ENCODE measurements at regions of chr2 and their contacts with region 1.

Region 1: DNA sequence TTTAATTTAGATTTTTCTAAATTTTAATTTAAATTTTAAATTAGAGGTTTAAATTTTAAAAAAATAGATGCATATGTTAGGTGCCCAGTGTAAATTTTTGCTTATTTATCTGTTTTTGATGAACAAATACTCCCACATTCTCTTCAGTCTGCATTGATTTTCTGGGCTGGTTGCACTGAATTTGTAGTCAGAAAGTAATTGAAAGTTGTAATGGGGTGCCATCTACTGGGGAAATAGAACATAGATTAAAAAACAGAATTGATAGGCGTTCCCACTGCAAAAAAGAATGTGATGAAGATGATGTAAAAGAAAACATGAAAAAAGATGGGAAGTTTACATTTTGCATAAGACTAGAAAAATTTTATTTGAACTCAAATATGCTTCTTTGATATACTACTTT is 51.7 kb upstream of the CCDC85A start:
- DNase-seq: no peak
- ATAC-seq: peak; percentile 61 to 76 (median 72)
- H3K4me3 ChIP-seq: no peak overlapping the region
- H3K27ac ChIP-seq: no peak overlapping the region
- H3K4me1 ChIP-seq: no peaks in the 10 kb centered on the region
- H3K27me3 ChIP-seq: no peaks in the 10 kb centered on the region
- CTCF ChIP-seq: peak in 3 of 4 donors; percentile 34 to 44 (median 39)

Region 2: DNA sequence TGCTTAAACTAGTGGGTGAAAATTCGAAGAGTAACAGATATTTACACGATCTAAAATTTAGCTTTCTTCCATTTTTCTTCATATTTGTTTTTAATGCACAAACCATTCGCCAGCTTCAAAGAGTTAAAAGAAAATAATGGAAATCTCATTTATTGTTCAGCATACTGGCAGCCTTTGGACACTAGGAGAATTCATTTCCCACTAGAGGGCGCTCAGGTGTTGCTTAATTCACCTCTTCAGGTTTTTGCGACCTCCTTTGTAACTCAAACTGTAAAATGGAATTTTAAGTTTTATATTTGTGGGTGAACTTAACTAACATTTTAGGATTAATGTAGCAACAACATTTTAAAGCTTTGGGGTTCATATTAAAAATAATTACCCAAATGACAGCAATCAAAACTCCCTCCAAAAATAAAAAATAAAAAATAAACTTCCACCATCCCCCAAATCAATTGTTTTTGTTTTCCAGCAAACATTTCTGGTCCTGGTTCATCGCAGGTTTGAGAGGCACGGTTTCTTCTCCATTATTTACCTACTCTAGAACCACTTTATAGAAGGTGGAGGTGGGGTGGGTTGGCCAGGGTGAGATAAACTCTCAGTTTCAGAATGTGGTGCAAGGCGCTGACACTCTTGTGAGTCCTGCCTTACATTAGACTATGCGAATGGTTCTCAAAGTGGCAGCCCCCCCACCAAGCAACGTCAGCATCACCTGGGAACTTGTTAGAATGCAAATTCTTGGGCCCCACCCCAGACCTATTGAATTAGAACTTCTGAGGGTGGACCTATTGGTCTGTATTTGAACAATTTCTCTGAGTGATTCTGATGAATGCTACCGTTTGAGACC is 413.8 kb before region 1 on chr2:
- intact Hi-C with region 1: loop called in 2 of 3 experiments (anchors 5 to 10 kb)
- DNase-seq: peak in 3 of 6 donors; percentile 21 to 61 (median 45)
- ATAC-seq: peak; percentile 63 to 82 (median 76)
- H3K4me3 ChIP-seq: no peak overlapping the region
- H3K27ac ChIP-seq: no peak overlapping the region
- H3K4me1 ChIP-seq: no peaks in the 10 kb centered on the region
- H3K27me3 ChIP-seq: no peaks in the 10 kb centered on the region
- CTCF ChIP-seq: peak; percentile 41 to 66 (median 62)

Region 3: DNA sequence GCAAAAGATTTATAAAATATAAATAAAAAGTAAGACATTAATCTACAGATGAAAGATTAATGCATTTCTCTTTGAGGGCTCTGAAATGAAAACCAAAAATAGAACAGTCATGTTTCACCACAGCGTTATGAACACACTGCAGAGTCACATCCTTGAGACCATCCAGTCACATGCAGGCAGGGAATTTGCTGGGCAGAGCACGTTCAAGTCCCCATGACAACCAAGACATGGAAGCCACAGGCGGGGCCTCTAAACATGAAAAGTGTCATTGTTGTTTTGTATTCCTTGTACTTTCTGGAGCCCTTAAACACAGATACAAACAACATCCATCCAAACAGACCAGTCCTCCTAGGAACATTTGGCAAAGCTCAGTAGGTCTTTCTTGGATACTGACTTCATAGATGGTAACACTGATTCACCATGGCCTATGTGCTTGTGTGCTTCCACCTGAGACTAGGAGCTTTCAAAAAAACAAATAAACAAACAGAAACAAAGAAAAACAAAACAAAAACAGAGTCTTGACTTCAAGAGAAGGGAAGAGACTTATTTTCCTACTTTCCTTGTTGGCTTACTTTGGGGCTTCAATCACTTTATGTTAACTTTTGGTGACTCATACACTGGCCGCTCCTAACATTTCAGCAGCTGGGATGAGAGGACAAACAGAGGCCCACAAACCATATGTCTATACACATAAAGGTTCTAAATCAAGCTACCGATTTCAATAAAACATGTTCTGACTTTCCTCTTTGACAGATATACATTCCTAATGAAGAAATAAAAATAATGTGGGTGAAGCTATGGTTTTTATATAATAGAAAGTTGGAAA is 47.8 kb before region 1 on chr2:
- intact Hi-C with region 1: loop called in 1 of 3 experiments (anchors 10 kb)
- DNase-seq: no peak
- ATAC-seq: no peak
- H3K4me3 ChIP-seq: no peak overlapping the region
- H3K27ac ChIP-seq: no peak overlapping the region
- H3K4me1 ChIP-seq: no peaks in the 10 kb centered on the region
- H3K27me3 ChIP-seq: no peaks in the 10 kb centered on the region
- CTCF ChIP-seq: no peak

Measured in pancreas (tissue), 10 donors.